ENCODE measurements at regions of chr12 and their contacts with region 1.

Region 1: GRCh38 chr12:98653866-98654493 is 8.9 kb downstream of the APAF1 start:
- DNase-seq: no peak
- ATAC-seq: no peak
- H3K4me3 ChIP-seq: no peak overlapping the region
- H3K27ac ChIP-seq: no peak overlapping the region
- H3K4me1 ChIP-seq: no peaks in the 10 kb centered on the region
- H3K27me3 ChIP-seq: no peaks in the 10 kb centered on the region

Region 2: GRCh38 chr12:98559666-98560065 is 94.3 kb before region 1 on chr12:
- intact Hi-C with region 1: no loop called
- DNase-seq: no peak
- ATAC-seq: no peak
- H3K4me3 ChIP-seq: no peak overlapping the region
- H3K27ac ChIP-seq: no peak overlapping the region
- H3K4me1 ChIP-seq: no peaks in the 10 kb centered on the region
- H3K27me3 ChIP-seq: no peaks in the 10 kb centered on the region

Region 3: DNA sequence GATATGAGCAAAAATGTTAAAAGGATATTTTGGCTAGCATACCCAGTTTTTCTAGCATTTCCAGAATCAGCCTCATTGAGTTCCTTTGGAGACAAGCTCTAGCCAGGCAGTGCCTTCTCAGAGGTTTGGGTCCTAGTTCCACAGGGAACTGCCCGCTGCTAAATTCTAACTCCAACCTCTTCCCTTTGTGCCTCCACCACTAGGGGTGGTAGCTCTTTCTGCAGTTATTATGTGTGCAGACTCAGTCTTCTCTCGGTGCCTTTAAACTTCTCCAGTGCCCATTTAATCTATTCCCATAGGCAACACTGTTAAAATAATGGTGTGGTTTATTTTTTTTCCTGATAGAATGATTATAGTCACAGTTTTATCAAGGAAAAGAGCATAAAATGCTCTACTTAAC is 82.0 kb before region 1 on chr12:
- intact Hi-C with region 1: loop called (anchors 5 kb)
- DNase-seq: no peak
- ATAC-seq: no peak
- H3K4me3 ChIP-seq: no peak overlapping the region
- H3K27ac ChIP-seq: no peak overlapping the region
- H3K4me1 ChIP-seq: no peaks in the 10 kb centered on the region
- H3K27me3 ChIP-seq: no peaks in the 10 kb centered on the region

Region 4: DNA sequence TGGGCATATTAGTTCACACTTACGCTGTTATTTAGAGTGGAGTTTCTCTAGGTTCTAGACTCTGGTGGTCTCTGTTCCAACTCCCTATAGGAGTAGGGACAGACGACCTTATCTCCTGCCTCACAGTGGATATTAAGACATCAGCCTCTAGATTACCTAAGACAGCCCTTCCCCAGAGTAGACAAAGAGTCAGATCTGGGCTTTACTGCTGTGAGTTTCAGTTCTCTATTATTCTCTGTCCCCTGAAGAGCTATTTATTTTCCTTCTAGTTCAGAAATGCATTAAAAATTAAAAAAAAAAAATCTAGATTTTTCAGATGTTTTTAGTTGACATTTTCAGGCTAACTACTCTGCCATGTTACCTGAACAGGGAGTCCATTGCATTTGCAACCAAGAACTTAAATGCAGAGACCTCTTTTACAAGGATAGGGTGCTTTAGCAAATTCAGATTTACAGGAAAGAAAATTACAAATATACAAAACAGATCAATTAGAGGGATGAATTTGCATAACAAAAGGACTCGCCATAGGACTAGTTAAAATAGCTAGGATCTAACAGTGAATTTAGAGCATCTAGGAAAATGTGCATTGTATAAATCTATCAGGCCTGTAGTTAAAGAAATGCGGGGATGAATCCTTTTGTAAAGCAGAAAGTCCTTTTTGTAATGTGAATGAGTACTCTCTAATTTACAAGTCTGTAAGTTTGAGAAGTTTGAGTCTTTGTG is 372.5 kb after region 1 on chr12:
- intact Hi-C with region 1: no loop called
- DNase-seq: no peak
- ATAC-seq: no peak
- H3K4me3 ChIP-seq: no peak overlapping the region
- H3K27ac ChIP-seq: no peak overlapping the region
- H3K4me1 ChIP-seq: no peaks in the 10 kb centered on the region
- H3K27me3 ChIP-seq: no peaks in the 10 kb centered on the region

Measured in aorta (tissue), 5 donors.